Cardiac septum (tissue), 1 donor: ENCODE measurements at regions of chr5 and their contacts with region 1.

Region 1: GRCh38 chr5:132866342-132867045 is at the starts of genes GDF9 and UQCRQ:
- DNase-seq: peak; percentile 97
- total RNA-seq, gene GDF9: 0.43 TPM
- total RNA-seq, gene UQCRQ: 1,426 TPM

Region 2: GRCh38 chr5:132272311-132273210 is 593.9 kb before region 1 on chr5:
- intact Hi-C with region 1: no loop called
- DNase-seq: no peak

Region 3: GRCh38 chr5:132777209-132778069 is 89.1 kb before region 1 on chr5 and contains the start of gene SEPTIN8:
- intact Hi-C with region 1: loop called (anchors 10 kb)
- DNase-seq: peak; percentile 78
- total RNA-seq, gene SEPTIN8: 45.2 TPM

Region 4: DNA sequence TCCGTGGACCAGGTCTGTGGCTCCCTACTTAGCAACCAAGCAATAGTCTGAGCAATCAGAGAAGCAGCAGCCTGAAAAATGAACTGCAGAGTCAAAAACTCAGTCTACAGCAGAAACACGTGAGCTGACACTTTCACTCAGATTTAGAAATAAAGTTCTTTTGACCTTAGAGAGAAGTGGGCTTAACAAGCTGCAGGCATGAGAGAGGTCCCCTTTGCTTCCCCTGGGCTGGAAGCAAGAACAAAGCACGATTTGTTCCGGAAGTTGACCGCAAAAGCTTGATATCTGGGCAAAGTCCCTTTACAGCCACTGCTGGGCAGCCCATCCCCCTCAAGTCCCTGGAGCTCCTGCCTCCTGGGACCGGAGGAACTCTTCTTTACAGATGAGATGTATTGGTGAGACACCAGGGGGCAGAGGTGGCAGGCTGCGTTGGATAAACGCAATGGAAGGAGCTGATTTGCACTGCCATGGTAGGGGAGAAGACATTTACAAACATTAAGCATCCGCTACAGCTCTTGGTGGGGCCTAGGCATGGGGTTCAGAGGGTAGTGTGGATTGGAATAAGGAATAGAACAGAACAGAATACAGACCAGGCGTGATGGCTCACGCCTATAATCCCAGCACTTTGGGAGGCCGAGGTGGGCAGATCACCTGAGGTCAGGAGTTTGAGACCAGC is 59.2 kb before region 1 on chr5:
- intact Hi-C with region 1: no loop called
- DNase-seq: no peak

Region 5: DNA sequence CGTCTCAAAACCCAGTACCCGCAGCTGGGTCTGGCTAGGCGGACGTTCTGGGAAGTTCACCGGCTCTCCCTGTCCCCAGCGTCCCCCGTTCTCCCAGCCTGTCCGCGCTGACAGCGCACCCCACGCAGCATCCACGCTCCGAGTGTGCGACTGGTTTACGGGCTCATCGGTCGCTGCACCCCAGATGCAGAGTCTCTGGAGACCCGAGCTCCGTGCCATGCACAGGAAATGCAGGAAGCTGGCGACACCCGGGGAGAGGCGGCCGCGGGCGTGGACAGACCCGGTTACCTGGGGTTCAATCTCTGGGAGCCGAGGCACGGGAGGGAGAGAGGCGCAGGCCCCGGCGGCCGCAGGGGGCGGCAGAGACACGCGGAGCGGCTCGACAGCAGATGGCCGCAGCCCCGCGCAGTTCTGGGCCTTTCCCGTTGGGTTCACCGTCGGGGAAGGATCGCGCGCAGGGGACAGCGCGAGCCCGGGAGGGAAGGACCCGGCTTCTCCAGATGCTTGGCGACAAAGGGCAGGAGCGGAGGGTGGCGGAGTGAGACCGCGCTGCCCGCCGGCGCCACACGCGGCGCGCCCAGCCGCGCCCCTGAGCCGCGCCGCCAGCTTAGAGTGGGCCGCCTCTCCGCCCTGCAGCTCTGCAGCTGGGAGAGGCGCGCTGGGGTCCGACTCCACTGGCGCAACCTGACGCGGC is 36.6 kb before region 1 on chr5:
- intact Hi-C with region 1: loop called (anchors 2 kb)
- DNase-seq: peak; percentile 89

Region 6: DNA sequence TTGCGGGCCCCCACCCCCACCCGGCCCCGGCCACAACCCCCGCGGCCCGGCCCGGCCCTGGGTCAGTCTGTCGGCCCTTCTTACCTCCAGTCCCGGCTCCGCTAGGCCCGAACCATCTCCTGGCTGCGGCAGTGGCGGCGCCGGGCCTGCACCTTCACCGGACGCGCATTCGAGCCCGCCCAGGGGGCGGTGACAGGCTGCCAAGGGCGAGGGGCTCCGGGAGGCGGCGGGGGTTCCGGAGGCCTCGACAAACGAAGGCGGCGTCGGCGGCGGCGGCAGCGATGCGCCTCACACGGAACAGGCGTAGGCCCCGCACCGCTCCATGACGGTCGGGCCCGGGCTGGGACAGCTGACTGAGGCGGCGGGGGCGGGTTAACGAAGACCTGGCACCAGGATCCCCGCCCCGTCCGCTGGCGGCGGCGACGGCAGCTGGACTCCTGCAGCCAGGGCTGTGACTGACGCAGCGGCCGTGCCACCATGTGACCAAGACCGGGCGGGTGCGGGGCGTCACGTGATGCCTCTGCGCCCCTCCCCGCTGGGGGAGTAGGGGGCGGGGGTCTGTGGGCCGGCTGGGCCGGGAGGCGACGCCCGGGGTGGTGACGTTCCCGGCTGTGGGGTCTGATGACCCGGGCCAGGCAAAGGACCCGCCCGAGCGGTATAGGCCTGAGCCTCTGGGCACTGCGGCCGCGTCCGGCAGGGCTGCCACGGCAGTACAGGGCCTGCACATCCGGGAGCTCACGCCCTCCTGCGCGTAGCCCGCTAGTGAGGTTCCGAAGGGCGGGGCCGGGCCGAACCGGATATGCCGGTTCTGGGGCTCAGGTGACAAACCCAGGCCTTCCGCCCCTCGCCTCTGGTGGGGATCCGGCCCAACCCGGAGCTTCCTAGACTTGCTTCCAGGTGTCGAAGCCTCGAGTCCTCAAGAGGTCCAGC is 96.9 kb after region 1 on chr5 and contains the start of gene AFF4:
- intact Hi-C with region 1: loop called (anchors 1 kb)
- DNase-seq: peak; percentile 99
- total RNA-seq, gene AFF4: 59.1 TPM

Region 7: DNA sequence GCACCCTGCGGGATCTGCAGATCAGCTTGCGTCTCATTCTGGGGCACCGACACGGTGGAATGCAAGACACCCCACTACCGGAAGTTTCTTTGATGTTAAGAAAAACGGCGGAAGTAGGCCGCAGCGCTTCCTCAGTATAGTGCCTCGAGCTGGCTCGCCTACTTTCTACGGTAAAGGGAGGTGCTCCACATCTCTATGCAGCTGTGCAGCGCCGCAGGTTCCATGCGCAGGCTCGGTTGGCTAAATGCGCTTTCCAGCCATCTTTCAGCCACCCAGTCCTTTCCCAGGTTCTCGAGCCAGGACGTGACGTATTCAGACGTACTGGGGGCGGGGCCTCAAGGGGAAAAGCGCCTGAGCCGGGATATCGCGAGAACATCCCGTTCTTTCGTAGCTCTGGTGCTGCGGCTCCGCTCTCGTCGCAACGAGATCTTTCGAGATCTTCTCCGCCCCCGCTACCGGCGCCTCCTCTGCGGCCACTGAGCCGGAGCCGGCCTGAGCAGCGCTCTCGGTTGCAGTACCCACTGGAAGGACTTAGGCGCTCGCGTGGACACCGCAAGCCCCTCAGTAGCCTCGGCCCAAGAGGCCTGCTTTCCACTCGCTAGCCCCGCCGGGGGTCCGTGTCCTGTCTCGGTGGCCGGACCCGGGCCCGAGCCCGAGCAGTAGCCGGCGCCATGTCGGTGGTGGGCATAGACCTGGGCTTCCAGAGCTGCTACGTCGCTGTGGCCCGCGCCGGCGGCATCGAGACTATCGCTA is 185.3 kb after region 1 on chr5 and contains the start of gene HSPA4:
- intact Hi-C with region 1: loop called (anchors 5 kb)
- DNase-seq: peak; percentile 99
- total RNA-seq, gene HSPA4: 142 TPM